Psoas muscle (tissue), 8 donors: ENCODE measurements at regions of chr10 and their contacts with region 1.

Region 1: DNA sequence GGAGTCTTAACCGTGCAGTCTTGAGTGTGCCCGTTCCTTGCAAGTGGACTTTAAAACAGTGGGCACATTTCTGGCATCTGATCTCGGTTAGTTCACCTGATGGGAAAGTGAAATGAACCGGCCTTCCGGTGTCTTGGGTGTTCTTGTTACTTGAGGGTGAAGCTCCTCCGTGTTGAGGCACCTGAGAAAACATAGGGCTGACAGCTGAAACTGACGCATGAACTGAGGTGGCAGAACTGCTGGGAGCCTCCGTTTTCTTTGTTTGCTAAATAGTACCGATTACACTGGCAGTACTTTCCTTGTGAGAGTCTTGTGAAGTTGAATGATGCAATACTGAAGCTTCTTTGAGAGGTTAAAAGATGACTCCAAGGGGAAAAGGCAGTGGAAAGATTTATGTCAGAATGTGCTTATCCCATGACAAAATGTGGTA is 62.8 kb upstream of the SAMD8 start:
- DNase-seq: no peak
- ATAC-seq: peak in 1 of 4 donors; percentile 23
- H3K4me3 ChIP-seq: no peak overlapping the region
- H3K27ac ChIP-seq: no peak overlapping the region
- H3K4me1 ChIP-seq: peaks cover 4% of the 10 kb centered on the region
- H3K27me3 ChIP-seq: no peaks in the 10 kb centered on the region
- CTCF ChIP-seq: no peak

Region 2: GRCh38 chr10:75084834-75085384 is 36.2 kb after region 1 on chr10:
- intact Hi-C with region 1: loop called in 1 of 2 experiments (anchors 5 kb)
- DNase-seq: peak in 1 of 2 donors; percentile 29
- ATAC-seq: no peak
- H3K4me3 ChIP-seq: no peak overlapping the region
- H3K27ac ChIP-seq: no peak overlapping the region
- H3K4me1 ChIP-seq: no peaks in the 10 kb centered on the region
- H3K27me3 ChIP-seq: peaks cover 0 to 2% (median 0%) of the 10 kb centered on the region in 3 donors
- CTCF ChIP-seq: no peak

Region 3: GRCh38 chr10:76270464-76270863 is 1221.8 kb after region 1 on chr10:
- intact Hi-C with region 1: no loop called
- DNase-seq: no peak
- ATAC-seq: no peak
- H3K4me3 ChIP-seq: no peak overlapping the region
- H3K27ac ChIP-seq: no peak overlapping the region
- H3K4me1 ChIP-seq: no peaks in the 10 kb centered on the region
- H3K27me3 ChIP-seq: peaks cover 0 to 3% (median 0%) of the 10 kb centered on the region in 3 donors
- CTCF ChIP-seq: no peak